Head of caudate nucleus (tissue), 42 donors: ENCODE measurements at regions of chr7 and their contacts with region 1.

Region 1: GRCh38 chr7:138014686-138015085 is 12.8 kb upstream of the CREB3L2 start:
- DNase-seq: no peak

Region 2: DNA sequence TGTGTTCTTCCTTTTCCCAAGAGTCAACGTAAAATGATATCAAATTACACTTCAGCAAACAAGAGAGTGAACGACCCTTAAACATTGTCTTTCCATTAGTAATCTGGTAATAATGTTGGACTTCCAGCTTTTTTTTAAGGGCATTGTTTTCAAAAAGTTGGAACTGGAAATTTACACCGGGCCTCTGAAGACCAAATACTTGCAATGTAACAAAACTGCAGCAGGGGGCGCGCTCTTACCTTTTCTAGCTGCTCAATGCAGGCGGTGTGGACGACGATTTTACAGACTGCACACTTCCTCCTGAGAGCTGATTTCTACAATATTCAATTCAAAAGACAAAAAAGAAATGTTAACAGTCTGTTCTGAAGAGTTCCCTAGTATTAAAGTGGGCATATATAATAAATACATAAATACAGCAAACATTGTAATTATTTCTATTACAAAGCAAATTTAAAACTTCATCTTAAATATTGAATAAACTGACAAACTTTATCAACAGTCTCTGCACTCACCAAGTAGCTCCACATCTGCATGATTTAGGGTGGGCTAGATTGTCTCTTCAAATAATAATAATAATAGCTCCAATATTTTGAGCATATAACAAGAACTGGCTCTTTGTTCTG is 358.3 kb before region 1 on chr7:
- intact Hi-C with region 1: loop called (anchors 5 kb)
- DNase-seq: peak; percentile 65 to 94 (median 85)

Region 3: GRCh38 chr7:138595454-138595853 is 580.8 kb after region 1 on chr7:
- intact Hi-C with region 1: no loop called
- DNase-seq: no peak